Mammary epithelial cell (primary cell): ENCODE measurements at regions of chr13 and their contacts with region 1.

Region 1: DNA sequence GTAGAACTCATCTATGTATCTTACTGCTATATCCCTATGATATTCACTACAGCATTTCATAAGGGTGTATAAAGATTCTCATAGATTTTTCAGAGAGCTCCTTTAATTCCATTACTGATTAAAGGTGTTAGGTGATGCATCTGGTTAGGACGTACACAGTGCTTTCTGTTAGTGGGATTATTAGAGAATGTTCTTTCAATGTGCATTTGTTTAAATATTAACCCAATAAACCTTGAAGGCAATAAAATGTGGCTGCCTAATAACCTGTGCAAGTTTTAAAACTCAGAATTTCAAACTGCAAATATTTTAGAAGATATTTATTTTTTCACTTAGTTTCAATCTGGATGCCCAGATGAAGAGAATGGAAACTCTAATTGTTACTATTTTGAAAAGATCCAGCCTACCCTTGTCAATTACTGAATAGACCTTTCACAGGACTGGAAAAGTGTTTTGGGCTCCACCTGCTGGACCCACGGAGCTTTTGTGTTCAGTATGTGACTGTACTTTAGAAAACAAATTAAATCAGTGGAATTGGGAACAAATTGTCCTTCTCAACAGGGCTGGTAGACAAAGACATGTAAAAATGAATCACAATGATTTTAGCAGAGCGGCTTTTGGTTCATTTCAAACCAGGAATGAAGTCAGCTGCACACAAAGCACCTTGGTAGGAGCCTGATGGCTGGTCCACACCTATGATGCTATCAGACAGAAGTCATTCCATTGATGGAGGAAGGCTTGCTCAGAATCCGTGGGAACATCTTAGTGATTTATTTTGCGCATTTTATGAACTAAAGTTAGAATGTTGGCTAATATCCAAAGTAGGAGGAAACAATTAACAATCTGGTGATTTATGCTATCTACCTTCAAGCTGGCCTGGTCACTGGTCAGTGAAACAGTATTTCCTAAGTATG is 89.4 kb upstream of the RAP2A start:
- DNase-seq: peak; percentile 49
- H3K4me3 ChIP-seq: no peak overlapping the region
- H3K27ac ChIP-seq: no peak overlapping the region
- H3K4me1 ChIP-seq: peaks cover 4% of the 10 kb centered on the region
- H3K27me3 ChIP-seq: no peaks in the 10 kb centered on the region
- CTCF ChIP-seq: peak; percentile 74 to 76

Region 2: GRCh38 chr13:96700657-96701056 is 643.9 kb before region 1 on chr13:
- CTCF ChIA-PET with region 1: no interaction called
- dilution Hi-C with region 1: no loop called
- in situ Hi-C with region 1: no loop called
- intact Hi-C with region 1: no loop called
- DNase-seq: no peak
- H3K4me3 ChIP-seq: no peak overlapping the region
- H3K27ac ChIP-seq: no peak overlapping the region
- H3K4me1 ChIP-seq: no peaks in the 10 kb centered on the region
- H3K27me3 ChIP-seq: no peaks in the 10 kb centered on the region
- CTCF ChIP-seq: no peak

Region 3: DNA sequence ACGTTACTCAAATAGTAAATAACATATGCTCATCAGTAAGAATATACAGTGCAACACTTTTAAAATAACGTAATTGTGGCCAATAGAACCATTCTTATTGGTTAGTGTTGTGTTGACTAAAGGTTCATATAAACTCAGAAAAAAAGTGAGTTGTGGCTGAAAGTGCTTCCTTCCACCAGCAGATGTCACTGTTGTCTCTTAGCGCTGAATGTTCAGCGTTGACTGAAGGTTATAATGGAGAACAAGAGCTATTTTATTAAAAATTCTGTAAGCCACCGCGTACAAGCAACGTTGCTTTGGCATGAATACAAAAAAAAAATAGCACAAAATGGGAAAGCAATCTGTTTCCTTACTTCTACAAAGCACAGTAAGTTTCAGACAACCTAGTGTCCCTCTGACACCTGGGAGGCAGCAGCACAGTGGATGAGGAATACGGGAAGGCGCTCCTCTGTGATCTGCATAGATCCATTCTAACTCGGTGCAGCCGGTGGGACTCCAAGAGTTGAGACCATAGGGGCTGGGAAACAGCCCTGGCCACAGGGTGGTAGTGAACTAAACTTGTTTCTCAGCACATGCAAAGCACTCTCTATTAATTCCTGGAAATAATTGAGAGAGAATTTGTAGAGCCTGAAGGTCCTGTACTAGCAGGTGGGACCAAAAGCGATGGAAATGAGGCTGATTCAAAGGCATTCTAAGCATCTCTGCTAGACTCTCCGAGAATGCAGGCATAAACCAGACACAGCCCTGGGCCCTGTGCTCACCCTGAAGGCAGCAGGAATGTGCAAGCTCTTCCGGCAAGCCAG is 326.3 kb before region 1 on chr13:
- CTCF ChIA-PET with region 1: no interaction called
- dilution Hi-C with region 1: no loop called
- in situ Hi-C with region 1: no loop called
- intact Hi-C with region 1: loop called (anchors 5 kb)
- DNase-seq: peak; percentile 39
- H3K4me3 ChIP-seq: no peak overlapping the region
- H3K27ac ChIP-seq: no peak overlapping the region
- H3K4me1 ChIP-seq: no peaks in the 10 kb centered on the region
- H3K27me3 ChIP-seq: peaks cover 3% of the 10 kb centered on the region
- CTCF ChIP-seq: peak; percentile 89 to 96

Region 4: DNA sequence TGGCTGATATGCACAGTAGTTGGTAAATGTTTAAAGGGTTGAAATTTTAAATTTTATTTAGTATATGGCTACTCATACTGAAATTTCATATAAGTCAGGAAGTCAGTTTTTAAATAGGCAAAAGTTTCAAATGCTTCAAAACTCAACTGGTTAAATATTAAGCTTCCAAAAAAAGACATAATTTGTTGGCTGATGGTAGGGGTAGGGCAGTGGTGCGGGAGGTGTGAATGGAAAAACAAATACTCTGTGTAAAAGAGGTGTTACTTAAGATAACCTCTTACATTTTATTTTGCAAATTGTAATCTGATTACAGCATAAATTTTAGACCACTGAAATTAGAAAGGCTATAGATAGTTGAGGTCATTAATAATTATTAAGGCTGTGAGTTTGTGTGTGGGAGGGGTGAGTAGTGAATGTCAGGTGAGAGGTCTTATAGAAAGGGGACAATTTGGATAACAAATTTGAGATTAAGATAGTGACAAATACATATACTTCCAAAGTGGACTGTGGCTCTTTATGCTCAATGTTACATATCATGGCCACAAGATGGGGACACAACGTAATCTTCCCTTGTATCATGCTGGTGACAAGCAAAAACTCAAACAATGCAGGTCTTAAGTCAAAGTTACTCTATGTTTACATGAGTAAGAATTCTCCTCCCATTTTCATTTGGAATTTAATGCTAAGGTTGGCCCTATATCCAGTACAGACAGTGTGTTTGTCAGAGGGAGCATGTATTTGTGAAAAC is 313.6 kb before region 1 on chr13:
- CTCF ChIA-PET with region 1: no interaction called
- dilution Hi-C with region 1: no loop called
- in situ Hi-C with region 1: no loop called
- intact Hi-C with region 1: loop called (anchors 1 kb)
- DNase-seq: peak; percentile 30
- H3K4me3 ChIP-seq: no peak overlapping the region
- H3K27ac ChIP-seq: no peak overlapping the region
- H3K4me1 ChIP-seq: no peaks in the 10 kb centered on the region
- H3K27me3 ChIP-seq: peaks cover 3% of the 10 kb centered on the region
- CTCF ChIP-seq: peak; percentile 41 to 48

Region 5: DNA sequence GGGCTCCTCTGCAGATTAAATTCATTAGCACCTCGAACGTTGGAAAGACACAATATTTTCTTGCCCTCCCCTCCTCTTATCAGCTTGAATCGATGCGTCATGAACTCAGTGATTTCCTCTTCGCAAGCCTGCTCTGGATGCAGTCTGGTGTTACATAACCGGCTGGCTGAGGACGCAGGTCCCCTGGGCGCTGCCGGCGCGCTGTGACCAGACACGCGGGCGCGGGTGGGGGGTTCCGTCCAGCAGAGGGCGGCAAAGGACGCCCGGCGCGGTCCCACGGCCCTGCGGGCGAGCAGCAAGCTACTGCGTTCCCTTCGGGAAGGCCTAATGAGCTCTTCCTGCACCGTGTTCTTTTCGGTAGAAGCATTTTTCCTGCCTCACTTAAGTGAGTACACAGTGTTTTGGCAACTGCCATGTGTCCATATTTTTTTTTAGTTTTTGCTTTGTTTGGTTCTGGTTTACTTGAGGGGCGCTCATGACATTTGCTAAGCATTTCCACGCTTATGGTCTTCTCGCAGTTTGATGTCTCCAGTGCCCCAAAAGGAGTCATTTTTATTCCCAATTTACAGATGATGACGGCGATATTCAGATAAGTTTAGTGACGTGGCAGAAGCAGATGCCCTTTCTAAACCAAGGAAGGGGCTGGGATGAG is 234.6 kb before region 1 on chr13:
- CTCF ChIA-PET with region 1: interaction called, 7 read pairs
- dilution Hi-C with region 1: no loop called
- in situ Hi-C with region 1: no loop called
- intact Hi-C with region 1: loop called (anchors 1 kb)
- DNase-seq: peak; percentile 85
- H3K4me3 ChIP-seq: no peak overlapping the region
- H3K27ac ChIP-seq: no peak overlapping the region
- H3K4me1 ChIP-seq: peaks cover 16% of the 10 kb centered on the region
- H3K27me3 ChIP-seq: no peaks in the 10 kb centered on the region
- CTCF ChIP-seq: peak; percentile 62 to 95

Region 6: GRCh38 chr13:97124916-97125809 is 219.4 kb before region 1 on chr13:
- CTCF ChIA-PET with region 1: no interaction called
- dilution Hi-C with region 1: no loop called
- in situ Hi-C with region 1: loop called in 1 of 2 experiments (anchors 10 kb)
- intact Hi-C with region 1: no loop called
- DNase-seq: peak; percentile 90
- H3K4me3 ChIP-seq: no peak overlapping the region
- H3K27ac ChIP-seq: peak overlapping the region; percentile 79
- H3K4me1 ChIP-seq: peaks cover 58% of the 10 kb centered on the region
- H3K27me3 ChIP-seq: no peaks in the 10 kb centered on the region
- CTCF ChIP-seq: peak in 1 of 2 donors; percentile 9

Region 7: DNA sequence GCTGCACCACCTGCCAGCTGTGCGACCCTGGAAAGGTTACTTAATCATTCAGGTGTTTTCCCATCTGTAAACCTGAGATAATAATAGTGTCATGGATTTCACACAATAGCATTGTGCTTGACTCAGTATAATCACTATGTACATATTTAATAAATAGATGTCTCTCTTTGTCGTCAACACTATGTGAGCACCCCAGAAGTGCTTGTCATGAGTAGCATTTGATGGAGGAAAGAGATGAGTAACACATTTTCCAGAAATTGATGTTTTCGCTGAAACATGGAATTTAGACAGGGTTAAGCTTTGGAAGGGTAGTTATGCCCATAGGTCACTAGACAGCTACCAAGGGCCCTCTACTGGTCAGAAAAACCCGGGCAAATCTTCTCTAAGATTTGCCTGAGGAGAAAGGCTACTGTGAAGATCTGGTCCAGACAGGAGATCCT is 131.9 kb before region 1 on chr13:
- CTCF ChIA-PET with region 1: no interaction called
- dilution Hi-C with region 1: no loop called
- in situ Hi-C with region 1: loop called in 1 of 2 experiments (anchors 25 kb)
- intact Hi-C with region 1: loop called (anchors 2 kb)
- DNase-seq: peak; percentile 67
- H3K4me3 ChIP-seq: no peak overlapping the region
- H3K27ac ChIP-seq: no peak overlapping the region
- H3K4me1 ChIP-seq: peaks cover 24% of the 10 kb centered on the region
- H3K27me3 ChIP-seq: no peaks in the 10 kb centered on the region
- CTCF ChIP-seq: peak; percentile 70 to 85

Region 8: DNA sequence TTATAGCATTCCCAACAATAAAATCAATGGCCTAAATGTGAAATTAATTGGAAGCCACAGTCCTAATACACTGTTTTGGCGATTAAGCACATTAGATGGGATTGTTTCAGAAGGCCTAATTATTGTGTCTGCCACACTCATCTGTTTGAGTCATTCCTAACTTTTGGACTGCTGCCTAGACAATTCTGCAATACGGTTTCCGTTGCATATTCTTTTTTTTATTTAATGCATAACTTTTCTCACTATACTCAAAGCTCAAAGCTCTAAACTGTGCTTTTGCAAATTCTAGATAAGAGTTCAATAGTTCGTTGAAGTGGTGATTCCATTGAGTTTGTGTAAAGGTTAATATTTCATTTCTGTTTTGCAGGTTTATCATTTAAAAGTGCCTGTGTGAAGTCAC is 69.3 kb before region 1 on chr13:
- CTCF ChIA-PET with region 1: no interaction called
- dilution Hi-C with region 1: no loop called
- in situ Hi-C with region 1: no loop called
- intact Hi-C with region 1: loop called (anchors 2 kb)
- DNase-seq: peak; percentile 79
- H3K4me3 ChIP-seq: peak overlapping the region in 1 of 3 experiments; percentile 13
- H3K27ac ChIP-seq: peak overlapping the region; percentile 97
- H3K4me1 ChIP-seq: peaks cover 74% of the 10 kb centered on the region
- H3K27me3 ChIP-seq: no peaks in the 10 kb centered on the region
- CTCF ChIP-seq: no peak

Region 9: DNA sequence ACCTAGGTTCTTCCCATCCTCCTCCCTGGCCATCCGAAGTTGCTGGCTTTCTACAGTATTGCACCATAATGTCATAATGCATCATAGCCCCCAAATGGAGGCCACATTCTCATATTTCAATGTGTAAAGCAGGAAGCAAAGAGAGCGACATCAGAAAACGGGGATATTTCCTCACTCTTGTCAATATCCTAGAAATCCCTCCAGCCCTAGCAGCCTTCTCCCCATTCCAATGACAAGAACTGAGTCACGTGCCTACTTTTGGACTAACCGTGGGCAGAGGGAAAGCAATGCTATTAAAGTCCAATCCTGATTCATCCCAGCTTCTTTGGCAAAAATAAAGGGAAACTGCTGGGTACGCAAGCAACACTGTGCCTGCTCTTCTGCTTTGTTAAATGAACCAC is 85.2 kb after region 1 on chr13:
- CTCF ChIA-PET with region 1: no interaction called
- dilution Hi-C with region 1: no loop called
- in situ Hi-C with region 1: no loop called
- intact Hi-C with region 1: no loop called
- DNase-seq: no peak
- H3K4me3 ChIP-seq: no peak overlapping the region
- H3K27ac ChIP-seq: no peak overlapping the region
- H3K4me1 ChIP-seq: peaks cover 5% of the 10 kb centered on the region
- H3K27me3 ChIP-seq: no peaks in the 10 kb centered on the region
- CTCF ChIP-seq: no peak